Caco-2 (cell line): ENCODE measurements at regions of chr21 and their contacts with region 1.

Region 1: GRCh38 chr21:28336314-28336713 is 656.4 kb downstream of the LTN1 start:
- DNase-seq: peak in 1 of 2 experiments; percentile 33
- H3K4me3 ChIP-seq: no peak overlapping the region
- H3K4me3 Mint-ChIP-seq: no peak overlapping the region
- H3K27ac Mint-ChIP-seq: no peak overlapping the region
- H3K4me1 ChIP-seq: peaks cover 21% of the 10 kb centered on the region
- H3K4me1 Mint-ChIP-seq: no peaks in the 10 kb centered on the region
- H3K27me3 ChIP-seq: no peaks in the 10 kb centered on the region
- H3K27me3 Mint-ChIP-seq: no peaks in the 10 kb centered on the region
- CTCF ChIP-seq: peak; percentile 59 to 61

Region 2: DNA sequence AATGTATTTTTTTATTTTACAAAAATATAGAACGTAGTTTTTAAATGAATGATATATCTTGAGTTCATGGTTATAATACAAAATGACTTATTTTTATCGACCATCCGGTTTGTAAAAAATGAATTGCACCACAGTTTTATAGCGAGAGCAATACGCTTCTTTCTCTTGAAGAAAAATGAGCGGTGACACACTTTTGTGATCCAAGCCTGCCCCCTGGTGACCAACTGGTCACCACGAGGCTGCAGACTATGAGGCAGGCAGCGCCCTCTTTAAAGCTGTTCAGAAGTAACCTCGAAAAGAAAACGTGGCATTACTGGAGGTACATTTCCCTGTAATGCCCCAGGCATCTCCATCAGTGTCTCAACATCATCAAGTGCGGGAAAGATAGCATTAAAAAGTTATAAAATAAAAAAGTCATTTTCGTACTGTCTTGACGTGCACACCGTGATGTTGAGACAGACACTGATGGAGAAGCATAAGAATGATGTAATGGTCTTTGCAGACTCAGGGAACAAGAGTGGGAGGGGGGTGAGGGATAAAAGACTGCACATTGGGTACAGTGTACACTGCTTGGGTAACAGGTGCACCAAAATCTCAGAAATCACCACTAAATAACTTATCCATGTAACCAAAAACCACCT is 635.2 kb before region 1 on chr21:
- CTCF ChIA-PET with region 1: interaction called, 3 read pairs
- POLR2A ChIA-PET with region 1: no interaction called
- intact Hi-C with region 1: loop called (anchors 1 kb)
- DNase-seq: peak; percentile 72 to 79
- H3K4me3 ChIP-seq: no peak overlapping the region
- H3K4me3 Mint-ChIP-seq: no peak overlapping the region
- H3K27ac Mint-ChIP-seq: no peak overlapping the region
- H3K4me1 ChIP-seq: no peaks in the 10 kb centered on the region
- H3K4me1 Mint-ChIP-seq: no peaks in the 10 kb centered on the region
- H3K27me3 ChIP-seq: no peaks in the 10 kb centered on the region
- H3K27me3 Mint-ChIP-seq: peaks cover 7% of the 10 kb centered on the region
- CTCF ChIP-seq: peak; percentile 86 to 90

Region 3: DNA sequence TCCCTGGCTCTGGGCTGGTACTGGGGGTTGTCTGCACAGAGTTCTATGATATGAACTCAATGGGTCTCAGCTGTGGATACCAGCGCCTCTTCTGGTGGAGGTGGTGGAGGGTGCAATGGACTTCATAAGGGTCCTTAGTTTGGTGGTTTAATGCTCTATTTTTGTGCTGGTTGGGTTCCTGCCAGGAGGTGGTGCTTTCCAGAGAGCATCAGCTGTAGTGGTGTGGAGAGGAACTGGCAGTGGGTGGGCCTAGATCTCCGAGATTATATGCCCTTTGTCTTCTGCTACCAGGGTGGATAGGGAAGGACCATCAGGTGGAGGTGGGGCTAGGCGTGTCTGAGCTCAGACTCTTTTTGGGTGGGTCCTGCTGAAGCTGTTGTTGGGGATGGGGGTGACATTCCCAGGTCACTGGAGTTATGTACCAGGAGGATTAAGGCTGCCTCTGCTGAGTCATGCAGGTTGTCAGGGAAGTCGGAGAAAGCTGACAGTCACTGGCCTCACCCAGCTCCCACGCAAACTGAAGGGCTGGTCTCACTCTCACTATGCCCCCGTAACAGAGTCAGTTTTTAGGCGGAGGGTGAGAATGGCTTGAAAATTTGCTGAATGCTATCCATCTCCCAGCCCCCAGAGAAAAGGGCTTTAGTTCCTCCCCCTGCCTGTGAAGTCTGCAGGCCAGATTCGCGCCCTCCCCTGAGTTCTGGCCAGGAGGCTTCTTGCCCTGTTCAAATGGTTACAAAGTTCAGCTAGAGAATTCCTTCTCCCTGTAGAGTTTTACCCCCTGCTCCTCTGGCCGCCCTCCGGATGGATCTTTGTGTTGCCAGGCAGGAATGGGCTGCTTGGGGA is 246.5 kb before region 1 on chr21:
- CTCF ChIA-PET with region 1: interaction called, 6 read pairs
- POLR2A ChIA-PET with region 1: no interaction called
- intact Hi-C with region 1: loop called (anchors 2 kb)
- DNase-seq: peak; percentile 59 to 83
- H3K4me3 ChIP-seq: peak overlapping the region; percentile 29
- H3K4me3 Mint-ChIP-seq: peak overlapping the region; percentile 82
- H3K27ac Mint-ChIP-seq: peak overlapping the region; percentile 94
- H3K4me1 ChIP-seq: peaks cover 20% of the 10 kb centered on the region
- H3K4me1 Mint-ChIP-seq: peaks cover 9% of the 10 kb centered on the region
- H3K27me3 ChIP-seq: no peaks in the 10 kb centered on the region
- H3K27me3 Mint-ChIP-seq: no peaks in the 10 kb centered on the region
- CTCF ChIP-seq: peak in 1 of 2 experiments; percentile 31

Region 4: DNA sequence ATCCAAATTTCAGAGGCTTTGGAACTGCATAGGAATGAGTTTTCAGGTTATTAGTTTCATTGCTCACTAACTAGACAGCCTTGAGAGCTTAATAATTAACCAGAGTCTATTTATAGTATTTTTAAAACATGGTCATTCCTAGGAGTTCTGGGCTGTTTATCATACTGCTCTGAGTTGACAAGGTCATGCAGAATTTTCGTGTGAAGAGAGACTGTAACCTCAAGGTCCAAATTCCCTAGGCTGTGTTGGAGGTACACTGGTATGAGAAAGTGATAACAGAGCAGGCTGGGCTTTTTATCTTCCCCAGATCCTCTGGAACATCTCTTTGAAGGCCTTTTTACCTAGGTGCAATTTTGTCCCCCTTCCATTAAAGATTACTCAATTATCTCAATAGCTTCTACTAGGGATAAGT is 79.9 kb before region 1 on chr21:
- CTCF ChIA-PET with region 1: no interaction called
- POLR2A ChIA-PET with region 1: no interaction called
- intact Hi-C with region 1: loop called (anchors 1 kb)
- DNase-seq: peak; percentile 79 to 86
- H3K4me3 ChIP-seq: no peak overlapping the region
- H3K4me3 Mint-ChIP-seq: peak overlapping the region; percentile 53
- H3K27ac Mint-ChIP-seq: peak overlapping the region; percentile 69
- H3K4me1 ChIP-seq: peaks cover 44% of the 10 kb centered on the region
- H3K4me1 Mint-ChIP-seq: peaks cover 44% of the 10 kb centered on the region
- H3K27me3 ChIP-seq: no peaks in the 10 kb centered on the region
- H3K27me3 Mint-ChIP-seq: no peaks in the 10 kb centered on the region
- CTCF ChIP-seq: no peak

Region 5: DNA sequence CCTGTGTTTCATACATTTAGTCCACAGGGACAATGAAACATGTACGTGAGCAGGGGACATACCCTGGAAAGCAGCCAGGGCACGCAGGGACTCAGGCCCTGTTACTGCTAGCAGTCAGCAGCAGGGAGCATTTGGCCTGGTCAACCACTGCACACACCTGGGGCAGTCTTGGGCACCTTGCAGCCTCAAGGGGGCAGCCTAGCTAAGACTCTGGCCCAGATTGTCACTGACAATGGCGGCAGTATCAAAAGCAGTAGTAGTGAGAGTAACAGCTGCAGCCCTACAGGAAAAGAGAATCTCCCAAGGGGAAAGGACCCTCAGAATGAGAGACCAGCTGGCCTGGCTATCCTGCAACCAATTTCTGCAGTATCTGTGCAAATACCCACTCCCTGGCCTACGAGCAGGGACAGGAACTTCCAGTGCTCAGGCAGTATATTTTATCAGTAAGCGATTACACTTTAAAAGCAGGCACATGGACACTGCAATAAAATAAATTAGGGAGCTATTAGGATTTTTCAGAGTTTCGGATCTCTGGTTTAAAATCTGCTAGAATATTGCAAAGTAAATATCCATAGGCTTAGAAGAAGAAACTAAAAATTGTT is 180.8 kb after region 1 on chr21:
- CTCF ChIA-PET with region 1: no interaction called
- POLR2A ChIA-PET with region 1: no interaction called
- intact Hi-C with region 1: loop called (anchors 10 kb)
- DNase-seq: peak; percentile 78 to 80
- H3K4me3 ChIP-seq: no peak overlapping the region
- H3K4me3 Mint-ChIP-seq: no peak overlapping the region
- H3K27ac Mint-ChIP-seq: no peak overlapping the region
- H3K4me1 ChIP-seq: no peaks in the 10 kb centered on the region
- H3K4me1 Mint-ChIP-seq: no peaks in the 10 kb centered on the region
- H3K27me3 ChIP-seq: no peaks in the 10 kb centered on the region
- H3K27me3 Mint-ChIP-seq: no peaks in the 10 kb centered on the region
- CTCF ChIP-seq: peak; percentile 48 to 91